ENCODE measurements at regions of chr7 and their contacts with region 1.

Region 1: DNA sequence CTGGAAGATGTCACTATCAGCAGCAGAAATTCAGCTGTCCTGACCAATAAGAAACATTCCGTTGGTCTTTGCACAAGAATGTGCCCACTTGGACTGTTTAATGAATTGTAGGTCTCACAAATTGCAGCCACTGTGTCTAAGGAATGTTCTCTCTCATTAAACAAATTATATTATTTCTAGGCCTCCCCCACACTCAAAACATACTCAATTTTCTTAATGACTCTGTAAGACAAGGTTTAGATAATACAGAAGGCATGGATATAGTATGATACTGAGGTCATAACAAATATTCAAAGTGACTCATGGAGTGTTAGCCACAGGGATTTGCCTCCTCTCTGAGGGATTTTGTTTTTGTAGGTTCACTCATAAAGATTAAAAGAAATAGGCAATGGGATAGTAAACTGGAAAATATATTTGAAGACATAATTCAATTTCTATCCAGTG is 197.5 kb downstream of the PTN start:
- DNase-seq: no peak
- H3K4me3 ChIP-seq: no peak overlapping the region
- H3K27ac ChIP-seq: no peak overlapping the region
- H3K4me1 ChIP-seq: no peaks in the 10 kb centered on the region
- H3K27me3 ChIP-seq: no peaks in the 10 kb centered on the region
- CTCF ChIP-seq: no peak

Region 2: GRCh38 chr7:137074386-137075030 is 71.5 kb before region 1 on chr7:
- CTCF ChIA-PET with region 1: interaction called, 12 read pairs
- POLR2A ChIA-PET with region 1: no interaction called
- intact Hi-C with region 1: no loop called
- DNase-seq: no peak
- H3K4me3 ChIP-seq: no peak overlapping the region
- H3K27ac ChIP-seq: no peak overlapping the region
- H3K4me1 ChIP-seq: peaks cover 5% of the 10 kb centered on the region; the same call in 1 of the 2 replicates
- H3K27me3 ChIP-seq: no peaks in the 10 kb centered on the region
- CTCF ChIP-seq: no peak

Measured in PC-9 (cell line).